MCF 10A (cell line): ENCODE measurements at regions of chr12 and their contacts with region 1.

Region 1: DNA sequence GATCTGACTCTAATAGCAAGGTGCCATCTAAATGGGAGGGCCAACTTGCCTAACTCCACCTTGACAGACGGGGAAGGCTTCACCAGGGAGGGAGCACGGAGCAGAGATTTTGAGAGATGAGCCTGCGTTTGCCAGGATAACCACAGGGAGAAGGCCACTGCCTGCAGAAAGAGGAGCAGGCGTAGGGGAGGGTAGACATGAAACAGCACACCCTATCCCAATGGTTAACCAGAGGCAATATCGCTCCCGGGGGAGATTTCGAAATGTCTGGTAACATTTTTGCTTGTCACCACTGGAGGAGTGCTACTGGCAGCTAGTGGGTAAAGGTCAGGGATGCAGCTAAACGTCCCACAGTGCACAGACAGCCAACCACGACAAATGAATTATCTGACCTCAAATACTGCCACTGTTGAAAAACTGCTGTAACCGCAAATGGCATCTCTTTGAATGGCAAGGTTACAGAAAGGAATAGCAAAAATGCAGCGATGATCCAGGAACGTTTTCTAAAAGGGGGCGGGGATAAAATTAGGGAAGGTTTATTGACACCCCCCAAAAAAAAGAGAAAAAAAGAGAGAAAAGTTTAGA is 126.0 kb upstream of the ATF7IP start:
- DNase-seq: no peak
- H3K4me3 Mint-ChIP-seq: no peak overlapping the region
- H3K27ac Mint-ChIP-seq: no peak overlapping the region
- H3K4me1 Mint-ChIP-seq: peaks cover 11% of the 10 kb centered on the region
- H3K27me3 Mint-ChIP-seq: no peaks in the 10 kb centered on the region
- CTCF ChIP-seq: no peak

Region 2: GRCh38 chr12:13941258-13942249 is 297.9 kb before region 1 on chr12:
- CTCF ChIA-PET with region 1: no interaction called
- POLR2A ChIA-PET with region 1: no interaction called
- intact Hi-C with region 1: no loop called
- DNase-seq: peak; percentile 80
- H3K4me3 Mint-ChIP-seq: no peak overlapping the region
- H3K27ac Mint-ChIP-seq: no peak overlapping the region
- H3K4me1 Mint-ChIP-seq: no peaks in the 10 kb centered on the region
- H3K27me3 Mint-ChIP-seq: no peaks in the 10 kb centered on the region
- CTCF ChIP-seq: peak; percentile 41

Region 3: DNA sequence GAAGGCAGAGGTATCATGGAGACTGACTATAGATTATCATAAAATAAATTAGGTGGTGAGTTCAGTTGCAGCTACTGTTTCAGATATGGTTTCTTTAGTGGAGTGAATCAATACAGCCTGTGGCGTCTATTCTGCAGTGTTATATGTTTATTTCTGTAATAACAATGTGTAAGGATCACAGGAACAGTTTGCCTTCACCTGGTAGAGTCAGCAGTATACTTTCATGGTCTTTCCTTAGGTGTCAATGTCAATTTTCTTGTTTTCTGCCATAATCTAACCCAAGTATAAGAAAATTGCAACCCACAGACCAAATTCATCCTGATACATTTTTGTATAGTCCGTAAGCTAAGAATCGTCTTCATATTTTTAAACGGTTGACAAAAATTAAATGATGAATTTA is 14.4 kb before region 1 on chr12:
- CTCF ChIA-PET with region 1: interaction called, 25 read pairs
- POLR2A ChIA-PET with region 1: no interaction called
- intact Hi-C with region 1: no loop called
- DNase-seq: no peak
- H3K4me3 Mint-ChIP-seq: no peak overlapping the region
- H3K27ac Mint-ChIP-seq: no peak overlapping the region
- H3K4me1 Mint-ChIP-seq: no peaks in the 10 kb centered on the region
- H3K27me3 Mint-ChIP-seq: no peaks in the 10 kb centered on the region
- CTCF ChIP-seq: no peak

Region 4: DNA sequence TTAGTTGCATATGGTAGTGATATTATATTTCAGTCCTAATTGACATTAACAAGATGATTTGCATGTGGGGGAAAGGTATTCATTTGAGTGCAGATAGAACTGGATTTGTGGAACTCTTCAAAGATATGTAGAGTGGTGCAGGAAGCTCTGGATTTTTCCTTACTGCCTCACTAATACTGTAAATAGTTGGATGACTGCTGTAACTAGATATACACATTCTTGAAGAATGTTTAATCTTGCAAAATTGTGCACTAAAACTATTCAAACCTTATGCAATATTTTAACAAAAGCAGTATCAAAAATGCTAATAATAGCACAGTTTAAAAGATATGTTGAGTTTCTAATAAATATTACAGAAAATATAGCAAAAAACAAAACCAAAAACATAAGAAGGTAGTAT is 83.0 kb after region 1 on chr12:
- CTCF ChIA-PET with region 1: no interaction called
- POLR2A ChIA-PET with region 1: no interaction called
- intact Hi-C with region 1: no loop called
- DNase-seq: no peak
- H3K4me3 Mint-ChIP-seq: no peak overlapping the region
- H3K27ac Mint-ChIP-seq: no peak overlapping the region
- H3K4me1 Mint-ChIP-seq: no peaks in the 10 kb centered on the region
- H3K27me3 Mint-ChIP-seq: no peaks in the 10 kb centered on the region
- CTCF ChIP-seq: no peak

Region 5: GRCh38 chr12:14417715-14418114 is 178.3 kb after region 1 on chr12:
- CTCF ChIA-PET with region 1: interaction called, 6 read pairs
- POLR2A ChIA-PET with region 1: interaction called, 3 read pairs
- intact Hi-C with region 1: loop called (anchors 2 kb)
- DNase-seq: peak; percentile 65
- H3K4me3 Mint-ChIP-seq: no peak overlapping the region
- H3K27ac Mint-ChIP-seq: peak overlapping the region; percentile 59
- H3K4me1 Mint-ChIP-seq: no peaks in the 10 kb centered on the region
- H3K27me3 Mint-ChIP-seq: no peaks in the 10 kb centered on the region
- CTCF ChIP-seq: no peak

Region 6: GRCh38 chr12:14514154-14514842 is 274.9 kb after region 1 on chr12:
- CTCF ChIA-PET with region 1: interaction called, 3 read pairs
- POLR2A ChIA-PET with region 1: interaction called, 3 read pairs
- intact Hi-C with region 1: loop called (anchors 1 kb)
- DNase-seq: peak; percentile 58
- H3K4me3 Mint-ChIP-seq: no peak overlapping the region
- H3K27ac Mint-ChIP-seq: peak overlapping the region; percentile 47
- H3K4me1 Mint-ChIP-seq: peaks cover 12% of the 10 kb centered on the region
- H3K27me3 Mint-ChIP-seq: no peaks in the 10 kb centered on the region
- CTCF ChIP-seq: peak; percentile 44

Region 7: GRCh38 chr12:14643251-14643650 is 403.8 kb after region 1 on chr12:
- CTCF ChIA-PET with region 1: no interaction called
- POLR2A ChIA-PET with region 1: no interaction called
- intact Hi-C with region 1: no loop called
- DNase-seq: no peak
- H3K4me3 Mint-ChIP-seq: no peak overlapping the region
- H3K27ac Mint-ChIP-seq: no peak overlapping the region
- H3K4me1 Mint-ChIP-seq: no peaks in the 10 kb centered on the region
- H3K27me3 Mint-ChIP-seq: no peaks in the 10 kb centered on the region
- CTCF ChIP-seq: no peak

Region 8: GRCh38 chr12:14664510-14664909 is 425.1 kb after region 1 on chr12:
- CTCF ChIA-PET with region 1: interaction called, 18 read pairs
- POLR2A ChIA-PET with region 1: no interaction called
- intact Hi-C with region 1: loop called (anchors 1 kb)
- DNase-seq: peak; percentile 53
- H3K4me3 Mint-ChIP-seq: no peak overlapping the region
- H3K27ac Mint-ChIP-seq: no peak overlapping the region
- H3K4me1 Mint-ChIP-seq: peaks cover 5% of the 10 kb centered on the region
- H3K27me3 Mint-ChIP-seq: no peaks in the 10 kb centered on the region
- CTCF ChIP-seq: peak; percentile 58